ENCODE measurements at regions of chr12 and their contacts with region 1.

Region 1: GRCh38 chr12:4276524-4277204 is 3.1 kb downstream of the CCND2 start:
- DNase-seq: peak; percentile 76 to 96
- ATAC-seq: peak; percentile 27 to 50 (median 27)
- H3K4me3 ChIP-seq: no peak overlapping the region
- H3K4me3 Mint-ChIP-seq: peak overlapping the region; percentile 92
- H3K27ac ChIP-seq: no peak overlapping the region
- H3K27ac Mint-ChIP-seq: peak overlapping the region; percentile 92 to 98
- H3K4me1 ChIP-seq: peaks cover 65% of the 10 kb centered on the region
- H3K4me1 Mint-ChIP-seq: peaks cover 59 to 61% of the 10 kb centered on the region in 2 donors
- H3K27me3 ChIP-seq: no peaks in the 10 kb centered on the region
- H3K27me3 Mint-ChIP-seq: no peaks in the 10 kb centered on the region
- CTCF ChIP-seq: peak; percentile 80

Region 2: DNA sequence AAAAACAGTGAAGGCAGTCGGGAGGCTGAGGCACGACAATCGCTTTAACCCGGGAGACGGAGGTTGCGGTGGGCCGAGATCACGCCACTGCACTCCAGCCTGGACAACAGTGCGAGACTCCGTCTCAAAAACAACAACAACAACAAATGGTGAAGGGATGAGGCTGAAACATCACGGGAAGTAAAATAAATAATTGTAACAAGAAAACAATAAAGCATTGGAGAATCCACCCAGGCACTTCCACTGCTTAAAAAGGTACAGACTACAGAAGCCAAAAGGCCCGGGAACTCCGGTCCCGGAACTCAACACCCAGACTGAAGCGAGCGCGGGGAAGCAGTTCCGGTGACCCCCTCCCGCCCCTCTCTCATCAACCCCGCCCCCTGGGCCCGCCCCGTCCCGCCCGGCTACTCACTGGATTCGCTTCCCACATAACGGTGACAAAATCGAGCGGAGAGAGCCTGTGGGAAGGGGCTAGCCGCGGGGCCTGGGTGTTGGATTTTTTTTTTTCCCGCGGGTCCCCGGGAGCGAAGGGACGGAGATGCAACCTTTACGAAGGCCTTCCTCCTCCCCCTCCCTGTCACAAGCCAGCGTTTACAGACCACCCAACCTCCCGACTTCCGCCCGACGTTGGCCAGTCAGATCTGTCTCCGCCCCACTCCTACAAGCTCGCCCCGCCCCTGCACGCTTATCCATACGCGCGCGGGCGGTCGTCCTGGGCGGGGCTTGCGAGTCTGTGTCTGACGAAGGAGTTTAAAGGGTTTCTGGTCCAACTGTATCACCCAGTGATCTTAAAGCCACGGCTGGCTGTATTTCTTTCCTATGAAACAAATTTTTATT is 403.6 kb before region 1 on chr12 and contains the start of gene PARP11:
- intact Hi-C with region 1: loop called (anchors 5 kb)
- DNase-seq: peak; percentile 96 to 99
- ATAC-seq: peak; percentile 95 to 100 (median 96)
- H3K4me3 ChIP-seq: peak within 1 kb of the TSS; percentile 58
- H3K4me3 Mint-ChIP-seq: peak within 1 kb of the TSS; percentile 94
- H3K27ac ChIP-seq: peak within 1 kb of the TSS; percentile 82
- H3K27ac Mint-ChIP-seq: peak within 1 kb of the TSS; percentile 98 to 99
- H3K4me1 ChIP-seq: peaks cover 19% of the 10 kb centered on the region
- H3K4me1 Mint-ChIP-seq: peaks cover 52 to 56% of the 10 kb centered on the region in 2 donors
- H3K27me3 ChIP-seq: no peaks in the 10 kb centered on the region
- H3K27me3 Mint-ChIP-seq: peaks cover 6 to 8% of the 10 kb centered on the region in 2 donors
- CTCF ChIP-seq: no peak
- total RNA-seq, gene PARP11: 18.8 to 27.3 (median 24.7) TPM

Region 3: GRCh38 chr12:3998968-3999826 is 277.5 kb before region 1 on chr12:
- intact Hi-C with region 1: loop called (anchors 1 kb)
- DNase-seq: peak in 1 of 2 donors; percentile 60
- ATAC-seq: no peak
- H3K4me3 ChIP-seq: no peak overlapping the region
- H3K4me3 Mint-ChIP-seq: no peak overlapping the region
- H3K27ac ChIP-seq: no peak overlapping the region
- H3K27ac Mint-ChIP-seq: no peak overlapping the region
- H3K4me1 ChIP-seq: no peaks in the 10 kb centered on the region
- H3K4me1 Mint-ChIP-seq: no peaks in the 10 kb centered on the region
- H3K27me3 ChIP-seq: no peaks in the 10 kb centered on the region
- H3K27me3 Mint-ChIP-seq: peaks cover 2 to 13% of the 10 kb centered on the region in 2 donors
- CTCF ChIP-seq: no peak

Region 4: GRCh38 chr12:4153343-4153892 is 123.2 kb before region 1 on chr12:
- intact Hi-C with region 1: loop called (anchors 2 kb)
- DNase-seq: peak; percentile 51 to 76
- ATAC-seq: peak; percentile 87 to 92 (median 92)
- H3K4me3 ChIP-seq: no peak overlapping the region
- H3K4me3 Mint-ChIP-seq: peak overlapping the region; percentile 69
- H3K27ac ChIP-seq: peak overlapping the region; percentile 95
- H3K27ac Mint-ChIP-seq: peak overlapping the region; percentile 93 to 94
- H3K4me1 ChIP-seq: peaks cover 42% of the 10 kb centered on the region
- H3K4me1 Mint-ChIP-seq: peaks cover 52 to 65% of the 10 kb centered on the region in 2 donors
- H3K27me3 ChIP-seq: no peaks in the 10 kb centered on the region
- H3K27me3 Mint-ChIP-seq: peaks cover 0 to 2% of the 10 kb centered on the region in 2 donors
- CTCF ChIP-seq: no peak

Region 5: DNA sequence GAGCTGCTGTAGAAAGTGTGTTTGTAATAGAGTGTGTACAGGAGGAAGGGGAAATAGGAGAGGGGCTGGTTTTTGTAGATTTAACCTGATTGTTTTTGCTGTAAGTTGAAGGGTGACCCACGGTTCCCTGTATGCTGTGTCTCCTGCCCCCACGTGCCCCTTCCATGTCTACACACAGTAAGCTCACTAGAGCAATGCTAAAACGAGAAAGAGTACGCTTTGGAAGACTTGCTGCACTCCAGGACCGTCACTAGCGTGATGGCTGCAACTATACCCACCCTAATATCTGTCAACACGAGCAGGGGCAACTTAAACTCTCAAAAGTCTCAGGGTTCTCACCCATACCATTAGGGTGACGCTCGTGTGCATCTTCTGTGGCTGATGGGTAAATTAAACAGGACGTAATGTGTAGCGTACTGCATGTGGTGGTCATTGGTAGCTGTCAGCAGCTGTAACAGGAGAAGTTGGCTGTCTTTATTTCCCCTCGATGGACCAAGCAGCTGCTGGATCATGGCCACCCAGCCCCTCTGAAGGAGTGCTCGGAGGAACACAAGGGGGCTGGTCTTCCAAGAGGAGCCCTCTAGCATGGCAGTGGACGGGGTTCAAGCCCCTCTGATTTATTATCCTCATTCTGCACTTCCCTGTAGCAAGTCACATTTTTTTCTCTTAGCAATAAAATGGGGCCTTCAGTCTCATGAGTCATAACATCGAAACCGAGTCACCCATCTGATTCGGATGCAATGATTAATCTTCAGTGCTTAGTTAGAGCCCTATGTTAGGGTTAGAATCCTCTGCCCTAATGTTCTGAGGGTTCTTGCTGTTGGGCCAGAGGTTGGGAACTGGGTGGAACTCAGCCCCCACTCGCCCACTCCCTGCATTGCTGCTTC is 10.9 kb after region 1 on chr12:
- intact Hi-C with region 1: no loop called
- DNase-seq: no peak
- ATAC-seq: no peak
- H3K4me3 ChIP-seq: no peak overlapping the region
- H3K4me3 Mint-ChIP-seq: no peak overlapping the region
- H3K27ac ChIP-seq: no peak overlapping the region
- H3K27ac Mint-ChIP-seq: peak overlapping the region; percentile 58 to 86
- H3K4me1 ChIP-seq: peaks cover 48% of the 10 kb centered on the region
- H3K4me1 Mint-ChIP-seq: peaks cover 71 to 88% of the 10 kb centered on the region in 2 donors
- H3K27me3 ChIP-seq: no peaks in the 10 kb centered on the region
- H3K27me3 Mint-ChIP-seq: no peaks in the 10 kb centered on the region
- CTCF ChIP-seq: no peak

Region 6: GRCh38 chr12:4320853-4321701 is 44.4 kb after region 1 on chr12 and contains the start of gene TIGAR:
- intact Hi-C with region 1: loop called (anchors 2 kb)
- DNase-seq: peak; percentile 93 to 96
- ATAC-seq: peak; percentile 96 to 100 (median 97)
- H3K4me3 ChIP-seq: peak within 1 kb of the TSS; percentile 98
- H3K4me3 Mint-ChIP-seq: peak within 1 kb of the TSS; percentile 95
- H3K27ac ChIP-seq: peak within 1 kb of the TSS; percentile 86
- H3K27ac Mint-ChIP-seq: peak within 1 kb of the TSS; percentile 91 to 95
- H3K4me1 ChIP-seq: peaks cover 22% of the 10 kb centered on the region
- H3K4me1 Mint-ChIP-seq: peaks cover 30 to 33% of the 10 kb centered on the region in 2 donors
- H3K27me3 ChIP-seq: no peaks in the 10 kb centered on the region
- H3K27me3 Mint-ChIP-seq: no peaks in the 10 kb centered on the region
- CTCF ChIP-seq: no peak
- total RNA-seq, gene TIGAR: 6.1 to 7.4 (median 7.3) TPM

Region 7: GRCh38 chr12:4690760-4691159 is 414.1 kb after region 1 on chr12:
- intact Hi-C with region 1: no loop called
- DNase-seq: no peak
- ATAC-seq: no peak
- H3K4me3 ChIP-seq: no peak overlapping the region
- H3K4me3 Mint-ChIP-seq: no peak overlapping the region
- H3K27ac ChIP-seq: no peak overlapping the region
- H3K27ac Mint-ChIP-seq: no peak overlapping the region
- H3K4me1 ChIP-seq: no peaks in the 10 kb centered on the region
- H3K4me1 Mint-ChIP-seq: peaks cover 0 to 4% of the 10 kb centered on the region in 2 donors
- H3K27me3 ChIP-seq: no peaks in the 10 kb centered on the region
- H3K27me3 Mint-ChIP-seq: no peaks in the 10 kb centered on the region
- CTCF ChIP-seq: no peak

Measured in natural killer cell (primary cell).